ENCODE measurements at regions of chr3 and their contacts with region 1.

Region 1: GRCh38 chr3:149969940-149970715 is 567 bp downstream of the PFN2 start:
- DNase-seq: peak; percentile 79 to 90
- H3K4me3 ChIP-seq: peak overlapping the region; percentile 78
- H3K27ac ChIP-seq: peak overlapping the region; percentile 88
- H3K4me1 ChIP-seq: peaks cover 35% of the 10 kb centered on the region
- H3K27me3 ChIP-seq: no peaks in the 10 kb centered on the region
- CTCF ChIP-seq: no peak

Region 2: GRCh38 chr3:149448331-149448831 is 521.7 kb before region 1 on chr3:
- CTCF ChIA-PET with region 1: no interaction called
- POLR2A ChIA-PET with region 1: interaction called, 10 read pairs
- intact Hi-C with region 1: no loop called
- DNase-seq: peak; percentile 22 to 81
- H3K4me3 ChIP-seq: no peak overlapping the region
- H3K27ac ChIP-seq: peak overlapping the region; percentile 81
- H3K4me1 ChIP-seq: peaks cover 36% of the 10 kb centered on the region
- H3K27me3 ChIP-seq: no peaks in the 10 kb centered on the region
- CTCF ChIP-seq: no peak

Region 3: DNA sequence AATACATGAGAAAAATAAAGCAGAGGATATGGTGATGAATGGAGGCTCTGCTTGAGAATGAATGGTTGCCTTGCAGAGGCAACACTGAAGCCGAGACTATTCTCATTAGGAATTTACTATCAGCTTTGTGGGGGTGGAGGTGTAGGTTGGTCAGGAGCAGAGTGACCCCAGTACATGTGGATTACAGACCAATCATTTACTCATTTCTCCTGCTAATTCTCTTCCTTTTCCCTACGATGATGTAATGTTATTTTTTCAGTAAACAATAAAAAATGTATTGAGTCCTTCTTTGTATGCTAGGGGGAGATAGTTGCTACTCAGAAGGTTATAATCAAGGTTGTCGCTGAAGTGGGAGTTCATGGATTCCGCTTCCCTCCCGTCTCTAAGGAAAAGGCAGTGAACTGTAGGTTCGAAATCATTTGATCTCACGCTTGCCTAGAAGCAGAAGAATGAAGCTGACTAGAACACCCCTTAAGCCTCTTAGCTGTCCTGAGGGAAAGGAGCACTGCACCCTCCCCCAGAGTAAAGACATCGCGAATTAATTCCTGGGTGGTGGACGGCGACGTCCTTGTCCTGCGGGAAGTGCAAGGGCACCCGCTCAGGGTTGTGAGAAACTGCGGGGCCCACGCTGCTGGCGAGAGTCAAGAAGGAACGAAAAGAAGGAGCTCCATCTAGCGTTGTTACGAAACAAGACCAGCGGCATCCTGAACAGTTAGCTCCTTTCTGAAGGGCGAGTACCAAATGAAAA is 213.7 kb after region 1 on chr3:
- CTCF ChIA-PET with region 1: interaction called, 26 read pairs
- POLR2A ChIA-PET with region 1: interaction called, 15 read pairs
- intact Hi-C with region 1: loop called (anchors 1 kb)
- DNase-seq: peak; percentile 58
- H3K4me3 ChIP-seq: peak overlapping the region; percentile 54
- H3K27ac ChIP-seq: 0 out of 2 replicates have a peak overlapping the region, but pooled peaks have one; percentile 17
- H3K4me1 ChIP-seq: peaks cover 18% of the 10 kb centered on the region
- H3K27me3 ChIP-seq: no peaks in the 10 kb centered on the region
- CTCF ChIP-seq: peak; percentile 64; the same call in 1 of the 2 replicates

Region 4: DNA sequence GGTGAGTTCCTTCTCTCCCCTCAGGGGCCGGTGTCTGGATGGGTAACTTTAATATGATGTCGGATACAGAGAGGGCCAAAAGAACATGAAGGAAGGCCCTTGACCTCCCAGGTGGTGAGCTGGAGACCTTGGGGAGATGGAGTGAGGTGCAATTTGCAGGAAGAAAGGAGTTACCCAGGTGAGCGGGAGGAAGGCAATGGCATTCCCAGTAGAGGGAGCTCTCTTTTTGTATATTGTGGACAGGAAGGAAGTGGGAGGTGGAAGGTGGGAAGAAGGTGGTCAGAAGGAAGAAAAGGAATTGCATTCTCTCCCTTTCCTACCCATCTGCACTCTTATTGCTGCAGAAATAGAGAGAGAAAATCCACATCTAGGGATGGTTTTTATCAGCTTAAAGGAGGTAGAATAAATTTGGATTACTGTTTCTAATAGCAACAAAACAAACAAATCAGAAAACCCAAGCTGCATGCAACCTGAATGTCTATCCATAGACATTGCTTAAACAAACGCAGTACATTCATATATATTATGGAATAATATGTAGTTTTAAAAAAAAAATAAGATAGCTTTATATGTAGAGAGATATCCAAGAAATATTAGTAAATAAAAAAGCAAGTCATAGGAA is 269.0 kb after region 1 on chr3:
- CTCF ChIA-PET with region 1: interaction called, 4 read pairs
- POLR2A ChIA-PET with region 1: no interaction called
- intact Hi-C with region 1: loop called (anchors 5 kb)
- DNase-seq: peak; percentile 36 to 41
- H3K4me3 ChIP-seq: peak overlapping the region; percentile 37; the same call in 1 of the 2 replicates
- H3K27ac ChIP-seq: peak overlapping the region; percentile 91
- H3K4me1 ChIP-seq: peaks cover 43% of the 10 kb centered on the region
- H3K27me3 ChIP-seq: no peaks in the 10 kb centered on the region
- CTCF ChIP-seq: peak; percentile 62

Region 5: DNA sequence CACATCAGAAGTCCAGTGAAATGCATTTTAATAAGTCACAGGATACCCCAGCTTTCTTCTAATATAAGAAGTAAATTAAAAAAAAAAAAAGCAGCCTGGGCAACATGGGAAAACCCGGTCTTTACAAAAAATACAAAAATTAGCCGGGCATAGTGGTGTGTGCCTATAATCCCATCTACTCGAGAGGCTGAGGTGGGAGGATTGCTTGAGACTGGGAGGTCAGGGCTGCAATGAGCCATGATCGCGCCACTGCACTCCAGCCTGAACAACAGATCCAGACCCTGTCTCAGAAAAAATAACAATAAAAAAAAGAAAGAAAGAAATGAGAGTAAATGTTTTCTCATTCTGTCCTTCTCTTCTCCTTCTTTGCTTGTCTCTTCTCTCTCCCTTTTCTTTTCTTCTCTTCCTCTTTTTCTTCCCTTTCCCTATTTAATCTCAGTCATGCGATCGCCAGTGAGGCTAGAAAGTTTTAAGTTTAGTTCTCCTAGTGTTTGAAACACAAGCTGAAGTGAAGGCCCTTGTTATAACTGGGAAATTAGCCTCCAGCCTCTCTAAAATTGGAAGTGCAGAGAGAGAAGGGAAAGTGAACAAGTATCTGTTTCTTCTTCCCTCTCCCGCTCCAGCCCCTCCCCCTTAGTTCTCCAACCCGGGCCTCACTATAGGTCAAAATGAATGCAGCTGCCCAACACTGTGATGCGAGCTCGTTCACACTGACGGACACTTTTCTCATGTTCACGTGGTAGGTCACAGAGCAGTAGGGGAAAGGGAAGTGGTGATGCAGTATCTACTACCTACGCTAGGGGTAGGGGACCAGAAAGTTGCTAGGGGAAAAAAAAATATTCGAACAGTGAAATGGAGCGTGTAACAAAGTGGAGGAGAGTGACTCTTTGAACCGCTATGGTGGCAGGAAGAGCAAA is 414.4 kb after region 1 on chr3:
- CTCF ChIA-PET with region 1: no interaction called
- POLR2A ChIA-PET with region 1: no interaction called
- intact Hi-C with region 1: no loop called
- DNase-seq: no peak
- H3K4me3 ChIP-seq: no peak overlapping the region
- H3K27ac ChIP-seq: no peak overlapping the region
- H3K4me1 ChIP-seq: no peaks in the 10 kb centered on the region
- H3K27me3 ChIP-seq: no peaks in the 10 kb centered on the region
- CTCF ChIP-seq: no peak

Region 6: DNA sequence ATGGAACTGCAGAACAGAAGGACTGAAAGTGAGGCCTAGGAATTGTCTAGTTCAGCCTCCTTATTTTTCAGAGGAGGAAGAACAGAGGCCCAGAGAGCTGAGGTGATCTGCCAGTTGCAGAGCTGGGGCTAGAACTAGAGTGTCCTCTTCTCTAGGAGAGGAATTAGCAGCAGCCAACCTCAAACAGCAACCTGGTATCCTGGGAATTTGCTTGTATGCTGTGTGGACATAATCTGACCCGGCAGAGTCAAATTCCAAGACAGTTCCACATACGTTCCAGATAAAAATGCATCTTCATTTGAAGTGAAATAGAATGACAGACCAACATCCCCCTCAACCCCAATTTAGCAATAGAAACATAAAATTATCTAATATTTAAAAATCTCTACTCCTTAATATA is 424.5 kb after region 1 on chr3:
- CTCF ChIA-PET with region 1: no interaction called
- POLR2A ChIA-PET with region 1: no interaction called
- intact Hi-C with region 1: no loop called
- DNase-seq: no peak
- H3K4me3 ChIP-seq: no peak overlapping the region
- H3K27ac ChIP-seq: no peak overlapping the region
- H3K4me1 ChIP-seq: peaks cover 10% of the 10 kb centered on the region; the same call in 1 of the 2 replicates
- H3K27me3 ChIP-seq: no peaks in the 10 kb centered on the region
- CTCF ChIP-seq: no peak

Region 7: GRCh38 chr3:150495563-150496168 is 525.5 kb after region 1 on chr3:
- CTCF ChIA-PET with region 1: interaction called, 3 read pairs
- POLR2A ChIA-PET with region 1: no interaction called
- intact Hi-C with region 1: loop called (anchors 1 kb)
- DNase-seq: no peak
- H3K4me3 ChIP-seq: no peak overlapping the region
- H3K27ac ChIP-seq: no peak overlapping the region
- H3K4me1 ChIP-seq: peaks cover 28% of the 10 kb centered on the region
- H3K27me3 ChIP-seq: no peaks in the 10 kb centered on the region
- CTCF ChIP-seq: peak; percentile 82